Activated T-helper 1 cell treated with anti-CD3 and anti-CD28 coated beads, Interleukin-12 subunit alpha, Interleukin-12 subunit beta, Interleukin-2, Interleukin-4 antibody, amounts not matched to agents 30 ng/mL and 10 ng/mL and 1 ng/mL, durations not matched to agents 14 hours and 24 hours and 36 hours (primary cell): ENCODE measurements at regions of chr4 and their contacts with region 1.

Region 1: GRCh38 chr4:158253350-158253980 is 43.2 kb downstream of the TMEM144 start:
- DNase-seq: peak; percentile 26
- H3K4me3 Mint-ChIP-seq: no peak overlapping the region
- H3K27ac Mint-ChIP-seq: no peak overlapping the region
- H3K4me1 Mint-ChIP-seq: peaks cover 10% of the 10 kb centered on the region
- H3K27me3 Mint-ChIP-seq: peaks cover 7% of the 10 kb centered on the region

Region 2: DNA sequence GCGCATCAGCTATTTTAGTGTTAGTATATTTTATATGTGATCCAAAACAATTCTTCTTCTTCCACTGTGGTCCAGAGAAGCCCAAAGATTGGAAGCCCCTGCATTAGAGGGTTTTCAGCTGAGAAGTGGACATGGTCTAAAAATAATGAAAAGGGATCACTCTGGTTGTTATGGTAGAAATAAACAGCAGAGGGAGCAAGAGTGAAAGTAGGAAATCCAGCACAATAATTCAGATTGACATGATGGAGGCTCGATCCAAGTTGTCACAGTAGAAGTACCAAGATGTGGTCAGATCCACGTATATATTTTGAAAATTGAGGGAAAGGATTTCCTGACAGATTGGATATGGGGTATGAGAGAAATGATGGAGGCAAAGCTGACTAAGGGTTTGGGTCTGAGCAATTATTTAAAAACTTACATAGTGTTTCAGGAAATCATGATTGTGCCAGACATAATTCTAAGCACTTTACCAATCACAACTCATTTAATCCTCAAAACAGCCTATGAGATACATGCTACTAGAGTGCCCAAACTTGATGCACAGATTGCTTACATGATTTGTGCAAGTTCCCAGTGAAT is 60.2 kb before region 1 on chr4:
- intact Hi-C with region 1: loop called (anchors 2 kb)
- DNase-seq: no peak
- H3K4me3 Mint-ChIP-seq: no peak overlapping the region
- H3K27ac Mint-ChIP-seq: no peak overlapping the region
- H3K4me1 Mint-ChIP-seq: no peaks in the 10 kb centered on the region
- H3K27me3 Mint-ChIP-seq: peaks cover 2% of the 10 kb centered on the region

Region 3: DNA sequence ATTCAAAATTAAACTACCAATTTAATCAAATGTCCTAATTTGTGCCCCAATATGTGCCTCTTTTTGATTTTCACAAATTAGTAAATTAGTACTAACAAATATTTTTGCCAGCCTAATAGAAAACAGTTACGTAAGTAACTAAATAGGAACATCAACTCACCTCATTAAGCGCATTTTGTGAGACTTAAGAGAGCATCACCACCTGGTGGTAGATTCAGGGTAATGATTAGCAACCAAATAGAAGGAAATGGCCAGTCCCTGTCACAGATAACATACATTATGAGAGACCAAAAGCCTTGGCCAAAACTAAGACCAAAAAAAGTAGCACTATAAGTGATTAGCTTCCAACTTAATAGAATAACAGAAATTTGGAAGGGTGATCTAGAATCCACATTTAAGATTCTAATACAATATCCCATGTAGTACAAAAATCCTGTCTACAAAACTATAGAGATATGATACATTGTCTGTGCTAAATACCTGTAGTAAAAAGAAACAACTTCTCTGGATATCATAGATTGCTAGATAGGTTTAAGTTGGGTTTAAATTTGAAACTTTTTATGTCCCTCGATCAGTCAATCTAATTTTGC is 371.5 kb after region 1 on chr4:
- intact Hi-C with region 1: loop called (anchors 1 kb)
- DNase-seq: no peak
- H3K4me3 Mint-ChIP-seq: no peak overlapping the region
- H3K27ac Mint-ChIP-seq: no peak overlapping the region
- H3K4me1 Mint-ChIP-seq: no peaks in the 10 kb centered on the region
- H3K27me3 Mint-ChIP-seq: peaks cover 10% of the 10 kb centered on the region

Region 4: DNA sequence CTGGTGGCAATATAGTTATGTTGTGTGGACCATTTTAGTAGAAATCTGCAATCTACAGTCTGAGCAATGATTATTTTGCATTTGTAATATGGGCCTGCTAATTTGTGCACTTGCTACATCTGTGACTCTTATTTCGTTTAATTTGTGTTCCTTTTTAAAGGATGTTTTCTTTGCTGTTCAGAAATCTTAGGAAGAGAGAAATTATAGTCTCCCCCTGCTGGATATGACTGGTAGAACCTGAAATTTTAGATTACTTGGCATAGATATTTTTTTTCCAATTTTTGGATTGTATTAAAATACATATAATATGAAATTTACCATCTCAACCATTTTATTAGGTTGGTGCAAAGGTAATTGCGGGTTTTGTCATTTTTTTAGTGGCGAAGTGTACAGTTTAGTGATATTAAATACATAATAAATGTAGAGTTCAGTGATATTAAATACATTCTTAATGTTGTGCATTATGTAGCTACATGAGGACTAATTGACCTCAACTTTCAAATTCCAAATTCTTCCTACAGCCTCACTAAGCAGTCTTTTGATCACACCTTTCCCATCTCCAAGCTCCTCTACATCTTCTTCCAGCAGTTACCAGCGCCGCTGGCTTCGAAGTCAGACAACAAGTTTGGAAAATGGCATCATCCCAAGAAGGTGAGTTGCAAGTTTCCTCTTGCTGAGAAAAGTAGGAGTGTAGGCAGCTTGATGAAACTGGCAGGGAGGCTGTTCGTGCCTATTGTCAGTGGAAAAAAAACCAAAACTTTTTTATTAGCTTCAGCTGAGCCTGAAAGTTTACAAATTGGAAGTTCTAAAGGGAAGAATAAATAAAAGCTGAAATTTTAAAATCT is 597.6 kb after region 1 on chr4:
- intact Hi-C with region 1: loop called (anchors 5 kb)
- DNase-seq: no peak
- H3K4me3 Mint-ChIP-seq: no peak overlapping the region
- H3K27ac Mint-ChIP-seq: no peak overlapping the region
- H3K4me1 Mint-ChIP-seq: peaks cover 14% of the 10 kb centered on the region
- H3K27me3 Mint-ChIP-seq: no peaks in the 10 kb centered on the region